ENCODE measurements at regions of chr3 and their contacts with region 1.

Region 1: DNA sequence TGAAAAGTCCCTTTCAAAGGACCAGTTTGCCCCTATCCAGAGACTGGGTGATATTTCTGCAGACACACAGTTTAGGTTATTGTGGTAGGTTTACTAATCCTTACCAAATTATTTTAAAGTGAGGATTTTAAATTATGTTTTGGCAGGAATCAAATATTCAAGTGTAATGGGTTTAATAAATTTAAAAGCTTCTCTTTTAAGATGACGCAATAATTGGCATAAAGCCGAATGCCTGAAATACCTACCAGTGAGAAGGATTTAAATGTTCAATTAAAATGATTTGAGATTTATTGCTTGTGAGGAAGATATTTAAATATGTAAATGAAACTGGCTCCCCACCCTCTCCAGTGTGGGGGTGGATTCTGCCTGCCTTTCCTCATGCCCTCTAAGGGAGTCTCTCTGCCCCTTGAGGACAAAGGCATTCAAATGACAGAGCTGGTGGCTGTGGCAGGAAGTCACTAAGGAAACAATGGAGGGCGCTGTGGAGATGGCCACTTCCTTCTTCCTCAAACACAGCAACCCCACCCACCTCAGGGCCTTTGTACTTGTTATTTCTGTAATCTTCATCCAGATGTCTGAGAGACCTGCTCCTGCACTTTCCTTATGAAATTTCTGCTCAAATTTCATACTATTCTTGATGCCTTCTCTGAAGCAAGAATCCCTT is 131.7 kb downstream of the TNIK start:
- DNase-seq: peak; percentile 80
- ATAC-seq: peak; percentile 91
- H3K4me3 Mint-ChIP-seq: peak overlapping the region; percentile 1
- H3K27ac Mint-ChIP-seq: peak overlapping the region; percentile 60
- H3K4me1 Mint-ChIP-seq: peaks cover 22% of the 10 kb centered on the region
- H3K27me3 Mint-ChIP-seq: no peaks in the 10 kb centered on the region

Region 2: GRCh38 chr3:171284308-171285075 is 44.1 kb before region 1 on chr3:
- CTCF ChIA-PET with region 1: no interaction called
- POLR2A ChIA-PET with region 1: no interaction called
- DNase-seq: no peak
- ATAC-seq: no peak
- H3K4me3 Mint-ChIP-seq: no peak overlapping the region
- H3K27ac Mint-ChIP-seq: no peak overlapping the region
- H3K4me1 Mint-ChIP-seq: peaks cover 41% of the 10 kb centered on the region
- H3K27me3 Mint-ChIP-seq: no peaks in the 10 kb centered on the region

Region 3: DNA sequence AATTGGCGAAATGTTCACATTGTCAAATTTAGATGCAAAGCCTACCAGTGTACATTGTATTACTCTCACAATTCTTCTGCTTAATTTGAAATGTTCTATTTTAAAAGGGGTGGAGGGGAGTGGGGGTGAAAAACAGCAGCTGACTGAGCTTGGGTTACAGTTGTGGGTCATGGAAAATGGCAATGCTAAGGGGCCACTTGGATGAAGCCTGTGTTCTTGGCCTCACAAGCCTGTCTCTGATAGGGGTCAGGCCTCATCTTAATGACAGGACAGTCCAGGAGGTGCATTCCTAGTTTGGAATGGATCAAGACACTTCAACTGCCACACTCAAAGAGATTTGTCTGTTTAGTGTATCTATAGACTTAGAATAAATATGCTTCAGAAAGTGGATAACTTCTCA is 26.6 kb before region 1 on chr3:
- CTCF ChIA-PET with region 1: no interaction called
- POLR2A ChIA-PET with region 1: no interaction called
- DNase-seq: no peak
- ATAC-seq: no peak
- H3K4me3 Mint-ChIP-seq: no peak overlapping the region
- H3K27ac Mint-ChIP-seq: no peak overlapping the region
- H3K4me1 Mint-ChIP-seq: peaks cover 3% of the 10 kb centered on the region
- H3K27me3 Mint-ChIP-seq: no peaks in the 10 kb centered on the region

Region 4: GRCh38 chr3:171347301-171348039 is 18.9 kb after region 1 on chr3:
- CTCF ChIA-PET with region 1: interaction called, 13 read pairs
- POLR2A ChIA-PET with region 1: interaction called, 3 read pairs
- DNase-seq: no peak
- ATAC-seq: no peak
- H3K4me3 Mint-ChIP-seq: no peak overlapping the region
- H3K27ac Mint-ChIP-seq: no peak overlapping the region
- H3K4me1 Mint-ChIP-seq: no peaks in the 10 kb centered on the region
- H3K27me3 Mint-ChIP-seq: no peaks in the 10 kb centered on the region

Measured in activated CD8-positive, alpha-beta T cell treated with anti-CD3 and anti-CD28 coated beads, Interleukin-2, amount 10 ng/mL, durations not matched to agents 7 days and 5 days (primary cell).